ENCODE measurements at regions of chr17 and their contacts with region 1.

Region 1: DNA sequence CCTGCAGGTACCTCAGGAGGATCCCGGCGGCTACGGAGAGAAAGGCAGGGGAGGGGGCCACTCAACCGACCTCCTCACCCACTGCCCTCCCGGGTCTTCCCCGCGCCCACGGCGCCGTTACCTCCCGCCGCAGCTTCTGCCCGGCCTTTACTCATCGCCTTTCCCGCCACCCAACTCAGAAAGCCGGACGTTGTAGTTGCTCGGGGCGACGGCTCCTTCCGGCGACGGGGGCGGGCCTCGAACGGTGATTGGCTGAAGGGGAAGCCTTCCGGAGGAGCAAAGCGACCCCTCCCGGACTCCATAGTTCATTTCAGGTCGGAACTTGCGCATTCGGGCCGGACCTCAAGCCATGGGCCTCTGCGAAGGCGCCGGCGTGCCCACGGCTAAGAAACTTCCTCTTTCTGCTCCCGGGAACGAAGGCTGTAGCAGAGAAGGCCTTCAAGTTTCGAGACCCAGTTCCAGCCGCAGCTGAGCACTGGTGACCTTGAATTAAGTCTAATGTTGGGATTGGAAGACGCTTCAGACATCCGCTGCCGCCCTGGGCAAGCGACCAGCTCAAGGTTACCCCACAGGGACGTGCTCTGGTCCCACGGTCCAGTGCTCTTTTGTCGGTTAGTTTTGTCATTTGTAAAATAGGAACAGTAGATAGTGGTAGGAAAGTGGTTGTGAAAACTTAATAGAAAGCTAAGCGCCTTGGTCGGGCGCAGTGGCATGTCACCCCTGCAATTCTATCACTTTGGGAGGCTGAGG is at the start of gene PSMC3IP:
- DNase-seq: peak; percentile 96 to 99
- ATAC-seq: peak; percentile 90 to 95
- H3K4me3 ChIP-seq: peak within 1 kb of the TSS; percentile 73
- H3K27ac ChIP-seq: peak within 1 kb of the TSS; percentile 87 to 94
- H3K4me1 ChIP-seq: peaks cover 20% of the 10 kb centered on the region; the same call in 2 of the 3 replicates
- CTCF ChIP-seq: peak; percentile 37
- EP300 ChIP-seq: no peak
- POLR2A ChIP-seq: peak; percentile 82
- RAD21 ChIP-seq: 0 out of 5 replicates have a peak, but pooled peaks of 1 of the 2 experiments have one; percentile 14
- polyA plus RNA-seq, gene PSMC3IP: 17.8 and 26.1 TPM in 2 replicates

Region 2: DNA sequence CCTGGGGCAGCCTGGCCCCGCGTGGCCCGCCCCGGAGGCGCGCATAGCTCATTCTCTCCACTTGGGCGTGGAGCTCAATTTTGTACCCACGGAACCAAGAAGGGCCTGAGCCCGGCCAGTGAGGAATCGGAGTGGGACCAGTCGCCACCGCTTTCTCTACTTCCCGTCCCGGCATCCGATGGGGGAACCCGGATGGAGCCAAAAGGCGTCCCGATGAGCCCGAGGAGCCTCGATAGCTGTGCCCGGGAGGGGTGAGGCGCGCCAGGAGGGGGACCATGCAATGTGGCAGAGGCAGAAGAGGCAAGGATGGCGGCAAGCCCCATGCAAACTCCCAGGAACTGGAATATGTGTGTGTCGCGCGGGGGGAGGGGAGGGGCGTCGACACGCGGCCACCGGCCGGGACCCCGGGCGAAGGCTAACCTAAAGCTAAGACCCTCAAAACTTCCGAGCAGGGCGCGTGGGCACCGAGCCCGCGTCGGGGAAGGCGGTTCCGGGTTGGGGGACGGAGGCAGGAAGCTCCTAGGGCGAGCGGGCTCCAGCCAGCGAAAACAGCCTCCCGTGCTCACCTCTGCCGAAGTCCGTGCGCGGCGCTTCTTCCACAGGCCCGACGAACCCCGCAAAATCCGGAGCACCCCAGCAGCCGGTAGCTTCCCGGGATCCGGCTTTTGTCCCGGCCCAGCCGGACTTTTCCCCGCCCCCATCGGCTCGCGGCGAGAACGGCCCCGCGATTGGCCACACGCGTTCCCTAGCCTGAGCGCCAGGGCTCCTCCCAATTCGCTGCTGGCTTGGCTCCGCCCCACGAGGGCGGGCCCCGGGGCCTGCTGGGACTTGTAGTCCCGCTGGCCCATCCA is 659.2 kb before region 1 on chr17 and contains the start of gene ACLY:
- CTCF ChIA-PET with region 1: no interaction called
- POLR2A ChIA-PET with region 1: no interaction called
- DNase-seq: peak; percentile 98
- ATAC-seq: peak; percentile 39 to 93
- H3K4me3 ChIP-seq: peak within 1 kb of the TSS; percentile 94
- H3K27ac ChIP-seq: peak within 1 kb of the TSS; percentile 93 to 95
- H3K4me1 ChIP-seq: peaks cover 52% of the 10 kb centered on the region
- CTCF ChIP-seq: no peak
- EP300 ChIP-seq: no peak
- POLR2A ChIP-seq: peak; percentile 97
- RAD21 ChIP-seq: 0 out of 5 replicates have a peak, but pooled peaks of 1 of the 2 experiments have one; percentile 33
- polyA plus RNA-seq, gene ACLY: 367 and 376 TPM in 2 replicates

Region 3: GRCh38 chr17:42459256-42459800 is 118.4 kb before region 1 on chr17:
- CTCF ChIA-PET with region 1: no interaction called
- POLR2A ChIA-PET with region 1: no interaction called
- DNase-seq: peak; percentile 68 to 74
- ATAC-seq: peak; percentile 77 to 79
- H3K4me3 ChIP-seq: peak overlapping the region; percentile 83
- H3K27ac ChIP-seq: peak overlapping the region; percentile 84 to 88
- H3K4me1 ChIP-seq: peaks cover 48% of the 10 kb centered on the region
- CTCF ChIP-seq: peak; percentile 79
- EP300 ChIP-seq: no peak
- POLR2A ChIP-seq: no peak
- RAD21 ChIP-seq: 0 out of 5 replicates have a peak, but pooled peaks of 1 of the 2 experiments have one; percentile 22

Region 4: GRCh38 chr17:42566883-42567573 is 10.7 kb before region 1 on chr17 and contains the start of gene MLX:
- CTCF ChIA-PET with region 1: interaction called, 120 read pairs
- POLR2A ChIA-PET with region 1: interaction called, 17 read pairs
- DNase-seq: peak; percentile 94 to 100
- ATAC-seq: peak; percentile 52 to 74
- H3K4me3 ChIP-seq: peak within 1 kb of the TSS; percentile 93
- H3K27ac ChIP-seq: peak within 1 kb of the TSS; percentile 96
- H3K4me1 ChIP-seq: peaks cover 32% of the 10 kb centered on the region
- CTCF ChIP-seq: no peak
- EP300 ChIP-seq: no peak
- POLR2A ChIP-seq: peak; percentile 42
- RAD21 ChIP-seq: no peak; a peak in 1 of 5 replicates
- polyA plus RNA-seq, gene MLX: 48.0 and 48.6 TPM in 2 replicates

Region 5: GRCh38 chr17:42623732-42624596 is 46.3 kb after region 1 on chr17:
- CTCF ChIA-PET with region 1: interaction called, 30 read pairs
- POLR2A ChIA-PET with region 1: no interaction called
- DNase-seq: peak; percentile 80 to 86
- ATAC-seq: peak; percentile 85 to 90
- H3K4me3 ChIP-seq: no peak overlapping the region
- H3K27ac ChIP-seq: peak overlapping the region; percentile 52 to 70; a peak in 5 of 6 replicates
- H3K4me1 ChIP-seq: peaks cover 15% of the 10 kb centered on the region
- CTCF ChIP-seq: peak; percentile 29; the same call in 2 of the 3 replicates
- EP300 ChIP-seq: no peak
- POLR2A ChIP-seq: no peak
- RAD21 ChIP-seq: peak in 1 of 2 experiments; percentile 12; a peak in 2 of 5 replicates

Region 6: DNA sequence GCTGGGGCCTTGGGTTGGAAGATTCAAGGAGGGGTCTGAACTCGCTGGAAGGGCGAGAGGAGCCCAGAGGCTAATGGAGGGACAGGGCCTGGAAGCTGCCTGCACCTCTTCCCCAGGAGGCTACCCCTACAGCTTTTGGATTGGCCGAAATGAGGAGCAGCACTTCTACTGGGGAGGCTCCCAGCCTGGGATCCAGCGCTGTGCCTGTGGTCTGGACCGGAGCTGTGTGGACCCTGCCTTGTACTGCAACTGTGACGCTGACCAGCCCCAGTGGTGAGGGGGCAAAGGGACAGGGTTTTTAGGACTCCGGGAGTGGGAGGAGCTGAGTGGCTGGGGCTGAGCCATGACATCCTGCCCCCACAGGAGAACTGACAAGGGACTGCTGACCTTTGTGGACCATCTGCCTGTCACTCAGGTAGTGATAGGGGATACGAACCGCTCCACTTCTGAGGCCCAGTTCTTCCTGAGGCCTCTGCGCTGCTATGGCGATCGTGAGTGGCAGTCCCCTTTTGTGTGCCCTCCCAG is 113.4 kb after region 1 on chr17:
- CTCF ChIA-PET with region 1: interaction called, 12 read pairs
- POLR2A ChIA-PET with region 1: no interaction called
- DNase-seq: no peak
- ATAC-seq: peak; percentile 14 to 23; a peak in 2 of 6 replicates
- H3K4me3 ChIP-seq: no peak overlapping the region
- H3K27ac ChIP-seq: no peak overlapping the region
- H3K4me1 ChIP-seq: no peaks in the 10 kb centered on the region
- CTCF ChIP-seq: no peak
- EP300 ChIP-seq: no peak
- POLR2A ChIP-seq: no peak
- RAD21 ChIP-seq: no peak

Region 7: GRCh38 chr17:42744806-42745617 is 167.3 kb after region 1 on chr17 and contains the start of gene EZH1:
- CTCF ChIA-PET with region 1: interaction called, 10 read pairs
- POLR2A ChIA-PET with region 1: no interaction called
- DNase-seq: peak; percentile 96 to 100
- ATAC-seq: peak; percentile 89 to 95
- H3K4me3 ChIP-seq: peak within 1 kb of the TSS; percentile 55
- H3K27ac ChIP-seq: peak within 1 kb of the TSS; percentile 79 to 91
- H3K4me1 ChIP-seq: peaks cover 9% of the 10 kb centered on the region; the same call in 2 of the 3 replicates
- CTCF ChIP-seq: no peak
- EP300 ChIP-seq: no peak
- POLR2A ChIP-seq: peak; percentile 63
- RAD21 ChIP-seq: no peak
- polyA plus RNA-seq, gene EZH1: 35.4 and 41.1 TPM in 2 replicates

Region 8: DNA sequence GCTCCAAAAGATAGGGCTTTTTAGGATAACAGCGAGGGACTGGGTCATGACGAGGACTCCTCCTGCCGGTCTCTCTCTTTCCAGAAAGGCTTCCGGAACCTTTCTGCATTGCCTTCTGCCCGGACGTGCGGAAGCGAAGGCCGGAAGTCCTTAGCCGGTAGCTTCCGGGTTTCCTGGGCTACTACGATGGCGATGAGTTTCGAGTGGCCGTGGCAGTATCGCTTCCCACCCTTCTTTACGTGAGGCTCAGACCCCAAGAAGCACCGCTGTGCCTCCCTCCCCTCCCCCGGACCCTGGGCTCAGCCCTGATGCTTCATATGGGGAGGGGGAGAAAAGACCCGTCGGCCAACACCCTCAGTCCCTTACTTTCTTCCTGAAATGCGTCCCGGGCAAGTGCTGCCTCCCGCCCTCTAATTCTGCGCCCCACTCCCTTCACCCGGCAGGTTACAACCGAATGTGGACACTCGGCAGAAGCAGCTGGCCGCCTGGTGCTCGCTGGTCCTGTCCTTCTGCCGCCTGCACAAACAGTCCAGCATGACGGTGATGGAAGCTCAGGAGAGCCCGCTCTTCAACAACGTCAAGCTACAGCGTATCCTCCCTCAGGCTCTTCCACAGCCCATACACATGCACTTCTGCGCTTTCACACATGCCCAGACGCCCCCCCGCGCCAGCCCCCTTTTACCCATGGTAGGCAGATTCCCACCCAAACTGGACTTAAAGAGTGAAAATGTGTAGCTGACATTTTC is 195.8 kb after region 1 on chr17 and contains the start of gene VPS25:
- CTCF ChIA-PET with region 1: interaction called, 9 read pairs
- POLR2A ChIA-PET with region 1: interaction called, 13 read pairs
- DNase-seq: peak; percentile 92 to 98
- ATAC-seq: peak; percentile 98
- H3K4me3 ChIP-seq: peak within 1 kb of the TSS; percentile 65
- H3K27ac ChIP-seq: peak within 1 kb of the TSS; percentile 80 to 97
- H3K4me1 ChIP-seq: peaks cover 21% of the 10 kb centered on the region
- CTCF ChIP-seq: no peak; the same call in 2 of the 3 replicates
- EP300 ChIP-seq: no peak
- POLR2A ChIP-seq: peak; percentile 96
- RAD21 ChIP-seq: peak; percentile 17 to 29; a peak in 3 of 5 replicates
- polyA plus RNA-seq, gene VPS25: 143 and 173 TPM in 2 replicates

Region 9: DNA sequence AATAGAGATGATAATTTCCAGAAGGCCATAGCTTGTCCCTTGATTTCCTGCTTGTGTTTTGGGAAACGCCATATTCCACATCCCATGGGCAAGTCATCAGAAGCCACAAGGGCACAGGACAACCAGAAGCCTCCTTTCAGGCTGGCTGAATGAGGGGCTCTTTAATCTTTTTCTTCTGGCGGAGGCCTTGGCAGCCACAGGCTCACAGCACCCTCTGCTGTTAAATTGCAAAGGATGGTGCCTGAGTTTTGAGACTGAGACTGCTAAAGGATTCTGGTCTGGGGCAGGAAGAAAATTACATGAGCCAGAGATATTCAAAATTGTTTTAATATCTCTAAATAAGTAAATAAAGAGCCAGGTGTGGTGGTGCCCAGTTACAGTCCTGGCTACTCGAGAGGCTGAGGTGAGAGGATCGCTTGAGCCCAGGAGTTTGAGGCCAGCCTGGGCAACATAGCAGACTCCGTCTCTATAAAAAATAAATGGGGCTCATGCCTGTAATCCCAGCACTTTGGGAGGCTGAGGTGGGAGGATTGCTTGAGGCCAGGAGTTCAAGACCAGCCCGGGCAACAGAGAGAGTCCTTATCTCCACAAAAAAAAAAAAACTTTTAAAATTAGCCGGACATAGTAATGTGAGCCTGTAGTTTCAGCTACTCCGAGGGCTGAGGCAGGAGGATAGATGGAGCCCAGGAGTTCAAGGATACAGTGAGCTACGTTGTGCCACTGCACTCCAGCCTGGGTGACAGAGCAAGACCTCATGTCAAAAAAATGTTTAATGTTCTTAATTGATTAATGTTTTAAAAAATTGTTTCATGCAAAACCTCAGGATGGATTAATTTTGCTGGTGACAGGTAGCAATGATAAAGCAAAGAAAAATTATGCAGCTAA is 360.2 kb after region 1 on chr17:
- CTCF ChIA-PET with region 1: interaction called, 11 read pairs
- POLR2A ChIA-PET with region 1: no interaction called
- DNase-seq: peak; percentile 78 to 81
- ATAC-seq: peak; percentile 96
- H3K4me3 ChIP-seq: no peak overlapping the region
- H3K27ac ChIP-seq: no peak overlapping the region
- H3K4me1 ChIP-seq: no peaks in the 10 kb centered on the region
- CTCF ChIP-seq: peak; percentile 93
- EP300 ChIP-seq: no peak
- POLR2A ChIP-seq: no peak
- RAD21 ChIP-seq: peak; percentile 97 to 98

Measured in A549 (cell line).